Body of pancreas (tissue), 4 donors: ENCODE measurements at regions of chr12 and their contacts with region 1.

Region 1: DNA sequence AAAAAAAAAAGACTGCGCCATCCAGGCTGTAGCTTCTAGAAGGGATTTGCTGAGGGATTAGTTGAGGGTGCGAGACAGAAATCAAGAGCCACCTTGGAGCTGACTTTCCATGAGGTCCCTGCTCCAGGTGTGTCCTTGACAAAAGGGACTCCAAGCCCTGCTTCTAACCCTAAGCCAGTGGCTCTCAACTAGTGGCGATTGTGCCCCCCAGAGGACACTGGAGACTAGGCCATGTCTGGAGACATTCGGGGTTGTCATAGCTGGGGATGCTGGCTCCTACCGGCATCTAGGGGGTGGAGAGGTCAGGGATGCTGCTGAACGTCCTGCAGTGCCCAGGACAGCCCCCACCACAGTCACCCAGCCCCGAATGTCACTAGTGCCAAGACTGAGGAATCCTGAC is 40.6 kb downstream of the SPRING1 start:
- DNase-seq: peak in 3 of 4 donors; percentile 28 to 41 (median 31)
- ATAC-seq: peak; percentile 29
- H3K4me3 ChIP-seq: no peak overlapping the region
- H3K27ac ChIP-seq: peak overlapping the region; percentile 68 to 83 (median 74)
- H3K4me1 ChIP-seq: peaks cover 47% of the 10 kb centered on the region
- H3K27me3 ChIP-seq: no peaks in the 10 kb centered on the region
- CTCF ChIP-seq: peak in 3 of 7 experiments; percentile 14 to 19 (median 19)
- POLR2A ChIP-seq: no peak

Region 2: DNA sequence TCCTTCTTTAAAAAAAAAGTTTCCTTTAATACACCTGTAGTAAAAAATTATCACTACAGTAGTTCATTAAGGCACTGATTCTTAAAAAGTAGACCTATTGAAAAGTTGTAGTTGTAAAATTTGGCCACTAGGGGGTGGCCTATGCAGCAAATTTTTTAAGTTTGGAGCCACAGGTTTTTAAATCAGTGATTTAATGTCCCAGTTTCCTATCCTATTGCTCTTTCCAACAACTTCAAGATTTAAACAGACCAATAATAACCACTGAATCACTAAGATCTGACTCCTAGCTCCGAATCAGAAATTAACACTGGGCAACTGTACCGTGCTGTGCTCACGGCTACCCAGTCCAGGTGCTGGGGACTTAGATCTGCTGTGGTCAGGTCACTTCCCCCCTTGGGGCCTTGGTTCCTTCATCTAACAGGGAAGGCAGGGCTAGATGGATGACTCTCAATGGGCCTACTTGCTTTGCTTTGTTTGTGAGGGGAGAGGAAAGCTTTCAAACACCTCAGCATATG is 699.1 kb before region 1 on chr12:
- intact Hi-C with region 1: loop called (anchors 10 kb)
- DNase-seq: peak in 1 of 4 donors; percentile 17
- ATAC-seq: peak; percentile 48
- H3K4me3 ChIP-seq: no peak overlapping the region
- H3K27ac ChIP-seq: no peak overlapping the region
- H3K4me1 ChIP-seq: peaks cover 13% of the 10 kb centered on the region
- H3K27me3 ChIP-seq: no peaks in the 10 kb centered on the region
- CTCF ChIP-seq: peak; percentile 55 to 78 (median 69)
- POLR2A ChIP-seq: no peak

Region 3: GRCh38 chr12:116737774-116738700 is 40.7 kb after region 1 on chr12 and contains the starts of genes RNFT2 and SPRING1:
- intact Hi-C with region 1: no loop called
- DNase-seq: peak; percentile 99
- ATAC-seq: peak; percentile 100
- H3K4me3 ChIP-seq: peak within 1 kb of the TSS; percentile 19 to 67
- H3K27ac ChIP-seq: peak within 1 kb of the TSS in 3 of 4 donors; percentile 67 to 77 (median 74)
- H3K4me1 ChIP-seq: peaks cover 24% of the 10 kb centered on the region
- H3K27me3 ChIP-seq: no peaks in the 10 kb centered on the region
- CTCF ChIP-seq: peak in 2 of 7 experiments; percentile 16 to 20
- POLR2A ChIP-seq: peak; percentile 58 to 75 (median 69)
- total RNA-seq, gene RNFT2: 1.3 to 1.6 TPM
- total RNA-seq, gene SPRING1: 9.1 to 9.9 TPM